ENCODE measurements at regions of chr5 and their contacts with region 1.

Region 1: GRCh38 chr5:124902097-124902821 is 155.8 kb upstream of the ZNF608 start:
- DNase-seq: peak; percentile 81
- ATAC-seq: peak; percentile 98
- H3K4me3 ChIP-seq: peak overlapping the region in 2 of 5 experiments; percentile 0 to 13
- H3K4me3 Mint-ChIP-seq: peak overlapping the region; percentile 66
- H3K27ac ChIP-seq: peak overlapping the region; percentile 58 to 70
- H3K27ac Mint-ChIP-seq: peak overlapping the region; percentile 82
- H3K4me1 ChIP-seq: peaks cover 22 to 27% of the 10 kb centered on the region in 2 donors
- H3K4me1 Mint-ChIP-seq: peaks cover 39% of the 10 kb centered on the region
- H3K27me3 ChIP-seq: no peaks in the 10 kb centered on the region
- H3K27me3 Mint-ChIP-seq: no peaks in the 10 kb centered on the region
- CTCF ChIP-seq: no peak

Region 2: DNA sequence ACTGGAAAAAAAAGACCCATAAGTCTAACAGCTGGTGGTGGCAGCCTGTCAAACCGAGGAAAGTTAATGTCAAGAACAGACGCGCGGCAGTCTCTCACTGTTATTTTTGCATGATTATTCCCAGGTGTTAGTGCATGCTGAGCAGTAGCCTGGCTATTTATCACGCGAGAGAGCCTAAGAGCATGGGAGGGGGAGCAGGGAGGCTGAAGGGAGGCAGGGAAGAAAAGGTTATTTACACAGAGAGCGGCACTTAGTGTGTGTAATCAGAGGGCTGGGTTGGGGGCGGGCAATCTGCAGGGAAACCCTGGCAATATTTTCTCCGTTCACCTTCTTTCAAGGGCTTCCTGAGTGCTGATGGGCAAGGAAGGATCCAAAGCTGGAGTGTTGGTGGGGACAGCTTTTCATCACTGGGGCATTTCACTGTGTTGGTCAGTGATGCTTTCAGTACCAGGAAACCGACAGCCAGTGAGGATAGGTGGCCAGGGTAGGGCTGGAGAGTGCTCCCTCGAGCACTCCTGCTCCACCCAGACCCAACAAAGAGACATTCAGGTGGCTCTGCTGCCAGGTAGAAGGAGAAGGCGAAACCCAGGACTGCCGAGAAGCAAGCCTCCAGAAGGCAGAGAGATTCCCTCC is 195.4 kb before region 1 on chr5:
- CTCF ChIA-PET with region 1: no interaction called
- POLR2A ChIA-PET with region 1: no interaction called
- intact Hi-C with region 1: loop called (anchors 1 kb)
- DNase-seq: peak; percentile 19
- ATAC-seq: no peak
- H3K4me3 ChIP-seq: peak overlapping the region in 2 of 5 experiments; percentile 24 to 30
- H3K4me3 Mint-ChIP-seq: peak overlapping the region; percentile 80
- H3K27ac ChIP-seq: peak overlapping the region; percentile 57 to 71
- H3K27ac Mint-ChIP-seq: peak overlapping the region; percentile 87
- H3K4me1 ChIP-seq: peaks cover 66 to 67% of the 10 kb centered on the region in 2 donors
- H3K4me1 Mint-ChIP-seq: peaks cover 82% of the 10 kb centered on the region
- H3K27me3 ChIP-seq: peaks cover 0 to 8% (median 0%) of the 10 kb centered on the region in 4 experiments
- H3K27me3 Mint-ChIP-seq: no peaks in the 10 kb centered on the region
- CTCF ChIP-seq: no peak

Region 3: GRCh38 chr5:124920909-124921666 is 18.8 kb after region 1 on chr5:
- CTCF ChIA-PET with region 1: interaction called, 6 read pairs
- POLR2A ChIA-PET with region 1: no interaction called
- intact Hi-C with region 1: loop called (anchors 1 kb)
- DNase-seq: peak; percentile 77
- ATAC-seq: peak; percentile 80
- H3K4me3 ChIP-seq: peak overlapping the region; percentile 2 to 61 (median 36)
- H3K4me3 Mint-ChIP-seq: no peak overlapping the region
- H3K27ac ChIP-seq: peak overlapping the region; percentile 54 to 71
- H3K27ac Mint-ChIP-seq: no peak overlapping the region
- H3K4me1 ChIP-seq: peaks cover 29 to 30% of the 10 kb centered on the region in 2 donors
- H3K4me1 Mint-ChIP-seq: peaks cover 27% of the 10 kb centered on the region
- H3K27me3 ChIP-seq: no peaks in the 10 kb centered on the region
- H3K27me3 Mint-ChIP-seq: no peaks in the 10 kb centered on the region
- CTCF ChIP-seq: no peak

Region 4: GRCh38 chr5:124935065-124935464 is 32.8 kb after region 1 on chr5:
- CTCF ChIA-PET with region 1: no interaction called
- POLR2A ChIA-PET with region 1: interaction called, 5 read pairs
- intact Hi-C with region 1: loop called (anchors 2 kb)
- DNase-seq: peak; percentile 81
- ATAC-seq: peak; percentile 69
- H3K4me3 ChIP-seq: no peak overlapping the region
- H3K4me3 Mint-ChIP-seq: peak overlapping the region; percentile 17
- H3K27ac ChIP-seq: peak overlapping the region; percentile 45 to 65
- H3K27ac Mint-ChIP-seq: peak overlapping the region; percentile 84
- H3K4me1 ChIP-seq: peaks cover 15 to 19% of the 10 kb centered on the region in 2 donors
- H3K4me1 Mint-ChIP-seq: peaks cover 17% of the 10 kb centered on the region
- H3K27me3 ChIP-seq: no peaks in the 10 kb centered on the region
- H3K27me3 Mint-ChIP-seq: no peaks in the 10 kb centered on the region
- CTCF ChIP-seq: no peak

Region 5: GRCh38 chr5:124980163-124980941 is 78.1 kb after region 1 on chr5:
- CTCF ChIA-PET with region 1: no interaction called
- POLR2A ChIA-PET with region 1: no interaction called
- intact Hi-C with region 1: loop called (anchors 2 kb)
- DNase-seq: peak; percentile 72
- ATAC-seq: peak; percentile 93
- H3K4me3 ChIP-seq: peak overlapping the region in 1 of 5 experiments; percentile 26
- H3K4me3 Mint-ChIP-seq: peak overlapping the region; percentile 64
- H3K27ac ChIP-seq: peak overlapping the region in 1 of 2 donors; percentile 43
- H3K27ac Mint-ChIP-seq: peak overlapping the region; percentile 15
- H3K4me1 ChIP-seq: peaks cover 49 to 52% of the 10 kb centered on the region in 2 donors
- H3K4me1 Mint-ChIP-seq: peaks cover 56% of the 10 kb centered on the region
- H3K27me3 ChIP-seq: no peaks in the 10 kb centered on the region
- H3K27me3 Mint-ChIP-seq: no peaks in the 10 kb centered on the region
- CTCF ChIP-seq: no peak

Region 6: GRCh38 chr5:125190232-125191087 is 288.2 kb after region 1 on chr5:
- CTCF ChIA-PET with region 1: no interaction called
- POLR2A ChIA-PET with region 1: no interaction called
- intact Hi-C with region 1: no loop called
- DNase-seq: no peak
- ATAC-seq: no peak
- H3K4me3 ChIP-seq: no peak overlapping the region
- H3K4me3 Mint-ChIP-seq: no peak overlapping the region
- H3K27ac ChIP-seq: no peak overlapping the region
- H3K27ac Mint-ChIP-seq: no peak overlapping the region
- H3K4me1 ChIP-seq: peaks cover 18 to 20% of the 10 kb centered on the region in 2 donors
- H3K4me1 Mint-ChIP-seq: peaks cover 28% of the 10 kb centered on the region
- H3K27me3 ChIP-seq: no peaks in the 10 kb centered on the region
- H3K27me3 Mint-ChIP-seq: no peaks in the 10 kb centered on the region
- CTCF ChIP-seq: no peak

Measured in B cell (primary cell).